CD8-positive, alpha-beta T cell (primary cell): ENCODE measurements at regions of chr17 and their contacts with region 1.

Region 1: DNA sequence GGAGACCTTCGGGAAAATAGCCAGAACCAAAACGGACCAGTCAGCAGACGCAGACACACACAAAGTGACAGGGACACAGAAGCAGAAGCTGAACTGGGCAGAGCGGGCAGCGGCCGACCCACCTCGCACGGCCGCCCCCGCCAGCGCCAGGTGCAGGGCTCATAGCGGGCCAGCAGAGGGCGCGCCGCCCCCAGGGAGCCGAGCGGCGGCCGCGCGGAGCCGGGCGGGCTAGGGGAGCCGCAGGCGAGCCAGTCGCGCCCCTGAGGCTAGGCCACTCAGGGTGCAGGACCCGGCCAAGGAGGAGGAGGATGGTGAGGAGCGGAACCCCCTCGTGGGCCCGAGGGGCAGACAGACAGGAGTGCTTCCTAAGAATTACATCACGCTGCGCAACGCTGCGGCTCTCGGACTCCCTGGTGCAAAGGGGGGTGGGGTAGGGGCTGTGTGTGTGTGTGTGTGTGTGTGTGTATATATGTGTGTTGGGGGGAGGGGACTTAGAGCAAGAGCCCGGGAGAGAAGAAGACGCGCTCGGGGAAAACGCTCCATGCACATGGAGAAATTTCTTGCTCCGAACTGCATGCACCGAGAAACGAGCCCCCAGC is 913 bp upstream of the NOG start:
- DNase-seq: peak; percentile 33 to 87 (median 64)
- ATAC-seq: peak; percentile 63
- H3K4me3 ChIP-seq: peak overlapping the region; percentile 50 to 83
- H3K4me3 Mint-ChIP-seq: peak overlapping the region; percentile 80
- H3K27ac ChIP-seq: peak overlapping the region in 1 of 2 experiments; percentile 46
- H3K27ac Mint-ChIP-seq: peak overlapping the region; percentile 49
- H3K4me1 ChIP-seq: peaks cover 8% of the 10 kb centered on the region
- H3K4me1 Mint-ChIP-seq: peaks cover 20% of the 10 kb centered on the region
- H3K27me3 ChIP-seq: peaks cover 0 to 28% of the 10 kb centered on the region in 2 experiments
- H3K27me3 Mint-ChIP-seq: peaks cover 28% of the 10 kb centered on the region
- CTCF ChIP-seq: peak; percentile 80

Region 2: GRCh38 chr17:55410722-55411462 is 1181.7 kb before region 1 on chr17:
- CTCF ChIA-PET with region 1: no interaction called
- POLR2A ChIA-PET with region 1: no interaction called
- intact Hi-C with region 1: loop called in 1 of 2 experiments (anchors 5 kb)
- DNase-seq: no peak
- ATAC-seq: no peak
- H3K4me3 ChIP-seq: no peak overlapping the region
- H3K4me3 Mint-ChIP-seq: no peak overlapping the region
- H3K27ac ChIP-seq: no peak overlapping the region
- H3K27ac Mint-ChIP-seq: no peak overlapping the region
- H3K4me1 ChIP-seq: peaks cover 19% of the 10 kb centered on the region
- H3K4me1 Mint-ChIP-seq: peaks cover 18% of the 10 kb centered on the region
- H3K27me3 ChIP-seq: no peaks in the 10 kb centered on the region
- H3K27me3 Mint-ChIP-seq: no peaks in the 10 kb centered on the region
- CTCF ChIP-seq: no peak

Region 3: GRCh38 chr17:56393156-56393555 is 199.4 kb before region 1 on chr17:
- CTCF ChIA-PET with region 1: no interaction called
- POLR2A ChIA-PET with region 1: no interaction called
- intact Hi-C with region 1: no loop called
- DNase-seq: no peak
- ATAC-seq: no peak
- H3K4me3 ChIP-seq: no peak overlapping the region
- H3K4me3 Mint-ChIP-seq: no peak overlapping the region
- H3K27ac ChIP-seq: no peak overlapping the region
- H3K27ac Mint-ChIP-seq: no peak overlapping the region
- H3K4me1 ChIP-seq: no peaks in the 10 kb centered on the region
- H3K4me1 Mint-ChIP-seq: no peaks in the 10 kb centered on the region
- H3K27me3 ChIP-seq: no peaks in the 10 kb centered on the region
- H3K27me3 Mint-ChIP-seq: no peaks in the 10 kb centered on the region
- CTCF ChIP-seq: no peak

Region 4: GRCh38 chr17:56629531-56630075 is 37.0 kb after region 1 on chr17:
- CTCF ChIA-PET with region 1: interaction called, 12 read pairs
- POLR2A ChIA-PET with region 1: interaction called, 13 read pairs
- intact Hi-C with region 1: loop called in 1 of 2 experiments (anchors 1 kb)
- DNase-seq: peak in 4 of 9 experiments; percentile 13 to 50 (median 20)
- ATAC-seq: peak; percentile 78
- H3K4me3 ChIP-seq: no peak overlapping the region
- H3K4me3 Mint-ChIP-seq: no peak overlapping the region
- H3K27ac ChIP-seq: no peak overlapping the region
- H3K27ac Mint-ChIP-seq: no peak overlapping the region
- H3K4me1 ChIP-seq: peaks cover 8% of the 10 kb centered on the region
- H3K4me1 Mint-ChIP-seq: peaks cover 6% of the 10 kb centered on the region
- H3K27me3 ChIP-seq: no peaks in the 10 kb centered on the region
- H3K27me3 Mint-ChIP-seq: no peaks in the 10 kb centered on the region
- CTCF ChIP-seq: no peak

Region 5: DNA sequence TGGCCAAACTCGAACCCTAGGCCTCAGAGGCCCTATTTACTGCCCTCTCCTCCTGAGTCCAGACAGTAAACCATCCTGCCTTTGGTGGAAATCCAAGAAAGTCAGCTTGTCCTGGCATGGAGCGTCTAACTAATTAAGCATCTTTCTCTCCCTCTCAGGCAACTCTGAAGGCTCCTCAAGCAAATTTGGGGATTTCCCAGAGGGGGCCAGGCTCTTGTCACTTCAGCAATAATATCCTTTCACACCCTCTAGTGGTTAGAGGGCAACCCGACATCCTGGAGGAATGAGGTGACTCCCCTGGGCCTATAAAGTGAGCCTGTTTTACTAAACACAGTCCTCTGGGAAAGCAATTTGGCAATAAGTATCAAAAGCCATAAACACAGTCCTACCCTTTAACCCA is 61.3 kb after region 1 on chr17:
- CTCF ChIA-PET with region 1: interaction called, 63 read pairs
- POLR2A ChIA-PET with region 1: interaction called, 7 read pairs
- intact Hi-C with region 1: loop called (anchors 1 kb)
- DNase-seq: peak; percentile 17 to 86 (median 58)
- ATAC-seq: peak; percentile 99
- H3K4me3 ChIP-seq: no peak overlapping the region
- H3K4me3 Mint-ChIP-seq: no peak overlapping the region
- H3K27ac ChIP-seq: no peak overlapping the region
- H3K27ac Mint-ChIP-seq: peak overlapping the region; percentile 69
- H3K4me1 ChIP-seq: peaks cover 4% of the 10 kb centered on the region
- H3K4me1 Mint-ChIP-seq: peaks cover 6% of the 10 kb centered on the region
- H3K27me3 ChIP-seq: no peaks in the 10 kb centered on the region
- H3K27me3 Mint-ChIP-seq: peaks cover 11% of the 10 kb centered on the region
- CTCF ChIP-seq: peak; percentile 56

Region 6: DNA sequence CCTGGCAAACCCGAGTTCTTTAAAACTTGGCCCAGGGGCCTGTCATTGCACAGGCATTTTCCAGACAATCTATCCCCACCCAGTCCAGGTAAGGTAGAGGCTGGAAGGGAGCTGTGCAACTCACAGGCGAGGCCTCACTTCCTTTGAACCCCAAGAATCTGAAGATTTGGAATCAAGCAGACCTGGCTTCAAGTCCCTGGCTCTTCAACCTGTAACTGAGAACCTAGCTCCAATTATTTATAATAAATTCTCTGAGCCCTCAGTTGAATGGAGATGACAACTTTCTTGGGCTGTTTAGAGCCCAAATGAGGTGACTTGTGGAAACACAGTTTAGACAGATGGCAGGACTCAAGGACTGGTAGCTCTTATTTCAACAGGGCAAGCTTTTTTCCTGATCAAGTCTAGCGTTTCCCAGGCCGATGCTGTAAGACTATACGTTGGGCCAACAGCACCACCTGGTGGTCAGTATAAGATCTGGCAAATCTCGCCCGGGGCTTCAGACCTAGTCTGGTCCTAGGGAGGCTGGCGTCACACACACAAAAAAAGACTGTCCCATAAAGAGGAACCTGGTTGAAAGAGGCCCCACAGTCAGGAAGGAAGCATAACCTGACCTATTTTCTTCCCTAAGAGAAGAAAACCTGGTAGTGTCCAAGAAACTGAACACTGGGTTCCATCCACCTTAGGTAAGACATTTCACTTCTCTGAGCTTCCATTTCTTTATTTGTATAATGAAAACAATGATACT is 123.2 kb after region 1 on chr17:
- CTCF ChIA-PET with region 1: interaction called, 72 read pairs
- POLR2A ChIA-PET with region 1: interaction called, 7 read pairs
- intact Hi-C with region 1: loop called (anchors 1 kb)
- DNase-seq: peak; percentile 47 to 83 (median 76)
- ATAC-seq: peak; percentile 84
- H3K4me3 ChIP-seq: no peak overlapping the region
- H3K4me3 Mint-ChIP-seq: no peak overlapping the region
- H3K27ac ChIP-seq: no peak overlapping the region
- H3K27ac Mint-ChIP-seq: no peak overlapping the region
- H3K4me1 ChIP-seq: no peaks in the 10 kb centered on the region
- H3K4me1 Mint-ChIP-seq: no peaks in the 10 kb centered on the region
- H3K27me3 ChIP-seq: no peaks in the 10 kb centered on the region
- H3K27me3 Mint-ChIP-seq: peaks cover 4% of the 10 kb centered on the region
- CTCF ChIP-seq: peak; percentile 75

Region 7: DNA sequence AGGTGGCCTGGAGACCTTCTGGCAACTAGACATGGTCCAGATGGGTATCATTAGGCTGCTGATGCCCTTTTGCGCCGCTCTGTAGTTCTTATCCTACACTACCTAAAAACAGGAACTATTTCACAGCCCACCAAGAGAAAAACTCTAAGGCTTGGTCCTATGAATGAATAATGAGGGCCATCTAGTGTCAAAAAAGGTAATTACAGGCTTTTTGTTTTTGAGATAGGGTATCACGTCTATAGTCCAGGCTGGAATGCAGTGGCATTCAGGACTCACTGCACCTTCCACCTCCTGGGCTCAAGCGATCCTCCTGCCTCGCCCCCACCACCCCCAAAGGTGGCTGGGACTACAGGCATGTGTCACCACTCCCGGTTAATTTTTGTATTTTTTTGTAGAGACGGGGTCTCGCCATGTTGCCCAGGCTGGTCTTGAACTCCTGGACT is 347.3 kb after region 1 on chr17:
- CTCF ChIA-PET with region 1: no interaction called
- POLR2A ChIA-PET with region 1: no interaction called
- intact Hi-C with region 1: loop called in 1 of 2 experiments (anchors 5 kb)
- DNase-seq: peak in 2 of 9 experiments; percentile 63 to 72
- ATAC-seq: peak; percentile 67
- H3K4me3 ChIP-seq: no peak overlapping the region
- H3K4me3 Mint-ChIP-seq: no peak overlapping the region
- H3K27ac ChIP-seq: no peak overlapping the region
- H3K27ac Mint-ChIP-seq: no peak overlapping the region
- H3K4me1 ChIP-seq: no peaks in the 10 kb centered on the region
- H3K4me1 Mint-ChIP-seq: no peaks in the 10 kb centered on the region
- H3K27me3 ChIP-seq: no peaks in the 10 kb centered on the region
- H3K27me3 Mint-ChIP-seq: no peaks in the 10 kb centered on the region
- CTCF ChIP-seq: peak; percentile 89

Region 8: DNA sequence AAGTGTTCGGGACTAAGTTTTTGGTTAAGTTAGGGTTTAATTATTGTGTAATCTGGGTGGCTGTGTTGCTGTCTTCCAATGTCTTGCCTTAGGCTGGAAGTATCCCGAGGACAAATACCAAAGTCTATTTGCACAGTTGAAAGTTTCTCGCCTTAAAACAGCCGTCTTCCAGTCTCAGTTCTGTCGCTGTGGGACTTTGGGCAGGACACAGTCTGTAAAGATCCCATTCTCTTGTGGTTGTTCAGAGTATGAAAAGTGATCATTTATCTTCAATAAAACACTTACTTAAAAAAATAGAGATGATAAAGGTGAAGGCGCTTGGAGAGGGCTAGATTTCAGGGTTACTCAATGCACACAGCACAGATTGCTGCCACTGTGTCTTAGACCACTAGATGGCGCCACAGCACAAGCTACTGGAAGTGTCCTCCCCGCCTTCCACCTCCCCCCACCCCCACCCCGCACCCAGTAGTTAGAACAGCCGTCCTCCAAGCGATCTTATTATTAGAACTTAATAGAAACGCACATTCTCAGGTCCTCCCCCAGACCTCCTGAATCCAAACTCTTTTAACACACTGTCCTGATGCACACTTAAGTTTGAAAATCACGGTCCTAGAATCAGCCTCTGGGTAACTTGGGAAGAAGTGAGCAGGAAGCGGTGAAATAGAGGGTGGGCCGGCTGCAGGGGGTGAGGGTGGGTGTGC is 538.3 kb after region 1 on chr17:
- CTCF ChIA-PET with region 1: no interaction called
- POLR2A ChIA-PET with region 1: no interaction called
- intact Hi-C with region 1: no loop called
- DNase-seq: peak; percentile 71 to 88 (median 85)
- ATAC-seq: peak; percentile 95
- H3K4me3 ChIP-seq: no peak overlapping the region
- H3K4me3 Mint-ChIP-seq: no peak overlapping the region
- H3K27ac ChIP-seq: no peak overlapping the region
- H3K27ac Mint-ChIP-seq: no peak overlapping the region
- H3K4me1 ChIP-seq: peaks cover 3% of the 10 kb centered on the region
- H3K4me1 Mint-ChIP-seq: peaks cover 9% of the 10 kb centered on the region
- H3K27me3 ChIP-seq: no peaks in the 10 kb centered on the region
- H3K27me3 Mint-ChIP-seq: no peaks in the 10 kb centered on the region
- CTCF ChIP-seq: peak; percentile 83

Region 9: GRCh38 chr17:57201481-57201880 is 608.9 kb after region 1 on chr17:
- CTCF ChIA-PET with region 1: no interaction called
- POLR2A ChIA-PET with region 1: no interaction called
- intact Hi-C with region 1: no loop called
- DNase-seq: no peak
- ATAC-seq: no peak
- H3K4me3 ChIP-seq: no peak overlapping the region
- H3K4me3 Mint-ChIP-seq: no peak overlapping the region
- H3K27ac ChIP-seq: no peak overlapping the region
- H3K27ac Mint-ChIP-seq: no peak overlapping the region
- H3K4me1 ChIP-seq: no peaks in the 10 kb centered on the region
- H3K4me1 Mint-ChIP-seq: no peaks in the 10 kb centered on the region
- H3K27me3 ChIP-seq: no peaks in the 10 kb centered on the region
- H3K27me3 Mint-ChIP-seq: peaks cover 2% of the 10 kb centered on the region
- CTCF ChIP-seq: no peak

Region 10: GRCh38 chr17:58337600-58338453 is 1745.2 kb after region 1 on chr17:
- CTCF ChIA-PET with region 1: no interaction called
- POLR2A ChIA-PET with region 1: no interaction called
- intact Hi-C with region 1: loop called in 1 of 2 experiments (anchors 10 kb)
- DNase-seq: peak; percentile 81 to 96 (median 92)
- ATAC-seq: peak; percentile 72
- H3K4me3 ChIP-seq: peak overlapping the region; percentile 90 to 99
- H3K4me3 Mint-ChIP-seq: peak overlapping the region; percentile 92
- H3K27ac ChIP-seq: peak overlapping the region; percentile 92 to 99
- H3K27ac Mint-ChIP-seq: peak overlapping the region; percentile 97
- H3K4me1 ChIP-seq: peaks cover 72% of the 10 kb centered on the region
- H3K4me1 Mint-ChIP-seq: peaks cover 83% of the 10 kb centered on the region
- H3K27me3 ChIP-seq: no peaks in the 10 kb centered on the region
- H3K27me3 Mint-ChIP-seq: no peaks in the 10 kb centered on the region
- CTCF ChIP-seq: no peak